GM23248 (cell line): ENCODE measurements at regions of chr1 and their contacts with region 1.

Region 1: DNA sequence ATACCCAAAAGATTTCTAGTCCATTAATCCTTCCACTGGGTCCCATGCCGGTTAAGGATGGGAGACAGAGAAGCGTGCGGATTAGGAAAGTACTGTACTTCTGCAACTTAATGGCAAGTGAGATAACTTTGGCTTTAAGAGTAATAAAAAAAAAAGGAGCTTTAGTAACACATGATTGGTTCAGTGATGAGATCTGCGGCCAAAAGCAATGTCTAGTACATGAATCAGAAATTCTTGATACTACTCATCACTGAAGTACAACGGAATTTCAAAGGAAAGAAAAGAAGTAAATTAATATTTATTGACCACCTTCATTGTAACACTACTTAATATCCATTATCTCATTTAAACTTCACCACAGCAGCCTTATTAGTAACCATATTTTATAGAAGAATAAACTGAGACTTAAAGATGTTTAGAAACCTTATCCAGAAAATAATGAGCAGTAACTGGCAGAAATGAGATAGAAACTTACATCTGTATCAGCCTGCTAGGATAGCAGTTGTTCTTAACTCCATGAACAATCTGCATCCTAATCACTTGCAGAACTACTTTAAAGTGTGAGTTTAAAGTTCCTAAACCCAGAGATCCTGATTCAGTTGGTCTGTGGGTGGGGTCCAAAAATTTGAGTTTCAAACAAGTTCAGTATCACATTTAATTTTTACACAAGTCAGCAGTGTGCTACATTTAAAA is 14.1 kb upstream of the NUF2 start:
- DNase-seq: peak; percentile 90
- H3K4me3 ChIP-seq: peak overlapping the region; percentile 38
- H3K27ac ChIP-seq: peak overlapping the region; percentile 36
- H3K4me1 ChIP-seq: peaks cover 19% of the 10 kb centered on the region
- H3K27me3 ChIP-seq: no peaks in the 10 kb centered on the region

Region 2: GRCh38 chr1:162854245-162854882 is 453.3 kb before region 1 on chr1:
- in situ Hi-C with region 1: loop called (anchors 10 kb)
- DNase-seq: peak; percentile 81
- H3K4me3 ChIP-seq: no peak overlapping the region
- H3K27ac ChIP-seq: no peak overlapping the region
- H3K4me1 ChIP-seq: peaks cover 47% of the 10 kb centered on the region
- H3K27me3 ChIP-seq: no peaks in the 10 kb centered on the region

Region 3: GRCh38 chr1:163071405-163072255 is 236.0 kb before region 1 on chr1:
- in situ Hi-C with region 1: loop called (anchors 10 kb)
- DNase-seq: peak; percentile 93
- H3K4me3 ChIP-seq: peak overlapping the region; percentile 82
- H3K27ac ChIP-seq: peak overlapping the region; percentile 20
- H3K4me1 ChIP-seq: peaks cover 32% of the 10 kb centered on the region
- H3K27me3 ChIP-seq: no peaks in the 10 kb centered on the region

Region 4: DNA sequence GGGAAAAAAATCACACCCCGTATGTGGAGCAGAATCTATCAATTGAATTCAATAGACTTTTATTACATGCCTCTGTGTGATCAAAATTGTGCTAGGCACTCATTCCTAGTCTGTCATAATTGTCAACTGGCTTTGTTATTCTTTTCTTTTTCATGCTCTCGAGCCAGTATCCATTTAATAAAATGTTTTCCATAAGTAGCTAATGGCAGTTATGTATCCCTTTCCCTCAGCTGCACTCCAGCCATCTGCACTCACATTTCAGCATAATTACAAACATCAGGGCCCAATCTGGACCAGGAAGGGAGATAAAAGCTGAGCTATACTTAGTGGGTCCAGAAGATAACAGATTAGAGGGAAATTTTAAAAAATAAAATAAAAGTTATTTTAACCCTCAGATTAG is 120.8 kb before region 1 on chr1:
- in situ Hi-C with region 1: loop called (anchors 10 kb)
- DNase-seq: no peak
- H3K4me3 ChIP-seq: no peak overlapping the region
- H3K27ac ChIP-seq: no peak overlapping the region
- H3K4me1 ChIP-seq: no peaks in the 10 kb centered on the region
- H3K27me3 ChIP-seq: no peaks in the 10 kb centered on the region

Region 5: DNA sequence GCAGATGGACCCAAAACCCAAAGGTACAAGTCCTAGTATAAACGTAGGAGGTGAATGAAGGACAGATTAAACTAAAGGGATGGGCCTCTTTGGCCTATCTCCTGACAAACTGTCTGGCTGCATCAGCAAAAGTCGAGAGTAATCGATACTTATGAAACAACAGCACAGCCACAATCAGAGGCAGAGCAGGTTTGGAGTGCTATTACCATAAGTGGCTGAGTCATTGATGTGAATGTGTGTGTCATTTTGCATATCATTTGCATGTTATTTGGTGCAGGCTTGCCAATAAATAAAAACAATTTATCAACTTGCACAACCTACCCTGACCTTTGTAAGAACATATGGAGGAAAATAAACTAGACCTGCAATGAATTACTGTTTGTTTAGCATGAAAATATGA is 297.3 kb after region 1 on chr1:
- in situ Hi-C with region 1: no loop called
- DNase-seq: no peak
- H3K4me3 ChIP-seq: no peak overlapping the region
- H3K27ac ChIP-seq: no peak overlapping the region
- H3K4me1 ChIP-seq: no peaks in the 10 kb centered on the region
- H3K27me3 ChIP-seq: no peaks in the 10 kb centered on the region